ENCODE measurements at regions of chr9 and their contacts with region 1.

Region 1: DNA sequence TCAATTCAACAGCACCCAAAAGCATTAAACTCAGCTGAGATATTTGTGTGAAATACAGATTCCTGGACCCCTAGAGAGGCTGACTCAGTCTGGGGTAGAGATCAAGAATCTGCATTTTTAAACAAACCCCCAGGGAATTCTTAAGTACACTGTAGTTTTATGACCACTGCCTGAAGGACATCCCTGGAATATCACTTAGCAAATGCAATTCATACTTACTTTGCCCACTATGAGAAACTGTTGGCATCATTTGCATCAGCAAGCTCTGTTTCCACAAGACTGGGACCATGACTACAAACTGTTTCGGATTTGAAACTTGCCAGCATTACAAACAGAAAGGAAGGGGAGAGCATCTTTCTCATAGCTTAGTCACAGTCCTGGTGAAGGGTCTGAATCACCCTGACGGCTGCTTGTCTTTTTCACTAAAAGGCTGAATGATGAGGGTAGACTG is 63.7 kb downstream of the MLLT3 start:
- DNase-seq: no peak
- ATAC-seq: peak; percentile 50
- H3K4me3 ChIP-seq: no peak overlapping the region
- H3K4me1 ChIP-seq: peaks cover 37% of the 10 kb centered on the region
- CTCF ChIP-seq: no peak

Region 2: GRCh38 chr9:20397348-20397747 is 161.2 kb before region 1 on chr9:
- intact Hi-C with region 1: no loop called
- DNase-seq: no peak
- ATAC-seq: peak; percentile 13
- H3K4me3 ChIP-seq: no peak overlapping the region
- H3K4me1 ChIP-seq: peaks cover 4% of the 10 kb centered on the region
- CTCF ChIP-seq: no peak

Region 3: DNA sequence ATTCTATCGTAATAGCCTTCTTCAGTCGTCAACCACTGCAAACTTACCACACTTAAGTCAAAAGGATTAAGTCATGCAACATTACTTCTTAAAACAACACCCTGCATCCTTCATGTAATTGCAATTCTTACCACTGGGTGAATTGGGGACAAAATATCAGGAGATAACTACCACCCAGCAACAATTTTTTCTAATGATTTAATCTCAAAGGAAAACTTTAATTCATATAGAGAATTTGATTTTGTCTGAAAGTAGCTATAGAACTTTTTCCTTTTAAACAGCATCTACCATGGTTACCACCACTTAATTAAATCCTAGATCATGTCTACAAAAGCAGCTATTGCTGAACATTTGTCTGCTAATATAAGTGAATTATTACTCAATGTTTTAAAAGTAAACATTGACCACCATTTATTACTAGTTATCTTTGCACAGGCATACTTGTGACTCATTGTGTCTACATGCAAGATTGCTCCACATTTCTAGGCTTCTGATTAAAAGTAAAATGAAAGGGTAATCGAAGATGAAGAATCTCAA is 53.2 kb after region 1 on chr9:
- intact Hi-C with region 1: loop called in 1 of 2 experiments (anchors 10 kb)
- DNase-seq: no peak
- ATAC-seq: peak; percentile 64
- H3K4me3 ChIP-seq: no peak overlapping the region
- H3K4me1 ChIP-seq: peaks cover 5% of the 10 kb centered on the region
- CTCF ChIP-seq: no peak

Region 4: GRCh38 chr9:20754556-20754955 is 196.0 kb after region 1 on chr9:
- intact Hi-C with region 1: no loop called
- DNase-seq: no peak
- ATAC-seq: no peak
- H3K4me3 ChIP-seq: no peak overlapping the region
- H3K4me1 ChIP-seq: no peaks in the 10 kb centered on the region
- CTCF ChIP-seq: no peak